ENCODE measurements at regions of chr2 and their contacts with region 1.

Region 1: GRCh38 chr2:109601783-109602182 is 12.0 kb downstream of the SEPTIN10 start:
- DNase-seq: no peak
- H3K4me3 ChIP-seq: no peak overlapping the region
- H3K27ac ChIP-seq: no peak overlapping the region
- H3K4me1 ChIP-seq: peaks cover 0 to 1% of the 10 kb centered on the region in 2 donors
- H3K27me3 ChIP-seq: no peaks in the 10 kb centered on the region
- CTCF ChIP-seq: no peak
- POLR2A ChIP-seq: no peak

Region 2: GRCh38 chr2:109368798-109369197 is 233.0 kb before region 1 on chr2:
- intact Hi-C with region 1: no loop called
- DNase-seq: peak in 1 of 7 donors; percentile 48
- H3K4me3 ChIP-seq: no peak overlapping the region
- H3K27ac ChIP-seq: no peak overlapping the region
- H3K4me1 ChIP-seq: peaks cover 0 to 11% of the 10 kb centered on the region in 2 donors
- H3K27me3 ChIP-seq: no peaks in the 10 kb centered on the region
- CTCF ChIP-seq: no peak
- POLR2A ChIP-seq: no peak

Region 3: DNA sequence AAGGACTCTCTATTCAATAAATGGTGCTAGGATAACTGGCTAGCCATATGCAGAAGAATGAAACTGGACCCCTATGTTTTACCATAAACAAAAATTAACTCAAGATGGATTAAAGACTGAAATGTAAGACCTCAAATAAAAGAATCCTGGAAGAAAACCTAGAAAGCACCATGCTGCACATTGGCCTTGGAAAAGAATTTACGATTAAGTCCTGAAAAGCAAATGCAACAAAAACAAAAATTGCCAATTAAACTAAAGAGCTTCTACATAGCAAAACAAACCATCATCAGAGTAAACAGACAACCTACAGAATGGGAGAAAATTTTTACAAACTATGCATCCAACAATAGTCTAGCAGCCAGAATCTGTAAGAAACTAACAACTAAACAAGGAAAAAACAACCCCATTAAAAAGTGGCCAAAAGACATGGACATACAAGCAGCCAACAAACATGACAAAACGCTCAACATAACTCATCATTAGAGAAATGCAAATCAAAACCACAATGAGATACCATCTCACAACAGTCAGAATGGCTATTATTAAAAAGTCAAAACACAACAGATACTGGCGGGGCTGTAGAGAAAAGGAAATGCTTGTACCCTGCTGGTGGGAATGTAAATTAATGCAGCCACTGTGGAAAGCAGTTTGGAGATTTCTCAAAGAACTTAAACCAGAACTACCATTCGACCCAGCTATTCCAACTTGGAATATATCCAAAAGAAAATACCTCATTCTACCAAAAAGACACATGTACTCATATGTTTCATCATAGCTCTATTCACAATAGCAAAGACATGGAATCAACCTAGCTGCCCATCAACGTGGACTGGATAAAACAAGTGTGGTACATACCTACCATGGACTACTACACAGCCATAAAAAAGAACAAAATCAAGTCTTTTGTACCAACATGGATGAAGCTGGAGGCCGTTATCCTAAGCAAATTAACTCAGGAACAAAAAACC is 18.6 kb before region 1 on chr2:
- intact Hi-C with region 1: loop called in 1 of 2 experiments (anchors 2 kb)
- DNase-seq: no peak
- H3K4me3 ChIP-seq: no peak overlapping the region
- H3K27ac ChIP-seq: no peak overlapping the region
- H3K4me1 ChIP-seq: no peaks in the 10 kb centered on the region
- H3K27me3 ChIP-seq: no peaks in the 10 kb centered on the region
- CTCF ChIP-seq: no peak
- POLR2A ChIP-seq: no peak

Measured in adrenal gland (tissue), 19 donors.